ENCODE measurements at regions of chr17 and their contacts with region 1.

Region 1: GRCh38 chr17:17712268-17712924 is 31.1 kb downstream of the RAI1 start:
- DNase-seq: no peak

Region 2: GRCh38 chr17:17694169-17695081 is 18.0 kb before region 1 on chr17:
- intact Hi-C with region 1: loop called (anchors 2 kb)
- DNase-seq: peak; percentile 90

Measured in cardiac septum (tissue), 1 donor.